ENCODE measurements at regions of chr1 and their contacts with region 1.

Region 1: DNA sequence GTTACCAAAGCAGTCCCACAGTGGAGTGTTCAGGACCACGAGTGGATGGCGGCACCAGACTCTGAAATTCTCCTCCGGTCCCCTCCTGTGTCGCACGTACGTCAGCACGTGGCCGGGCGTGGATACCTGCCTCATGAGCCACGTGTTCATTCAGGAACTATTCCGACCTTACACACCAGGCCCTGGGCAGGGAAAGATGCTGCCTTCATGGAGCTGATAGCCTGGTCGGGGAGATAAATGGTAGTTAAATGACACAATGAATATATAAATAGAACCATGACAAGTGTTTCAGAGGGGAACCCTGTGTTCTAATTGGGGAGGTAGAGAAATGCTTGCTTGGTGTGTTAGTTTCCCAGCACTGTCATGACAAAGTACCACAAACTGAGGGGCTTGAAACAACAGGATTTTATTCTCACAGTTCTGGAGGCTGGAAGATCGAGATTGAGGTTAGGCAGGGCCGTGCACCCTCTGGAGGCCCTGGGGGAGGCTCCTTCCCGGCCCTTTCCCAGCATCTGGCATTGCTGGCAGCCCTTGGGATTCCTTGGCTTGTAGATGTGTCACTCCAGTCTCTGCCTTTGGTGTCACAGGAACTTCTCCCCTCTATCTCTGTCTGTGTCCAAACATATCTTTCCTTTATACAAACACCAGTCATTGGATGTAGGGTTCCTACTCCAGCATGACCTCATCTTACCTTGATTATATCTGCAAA is 28.9 kb upstream of the GPR137B start:
- DNase-seq: no peak
- ATAC-seq: no peak
- H3K4me3 ChIP-seq: no peak overlapping the region
- H3K4me1 ChIP-seq: no peaks in the 10 kb centered on the region
- CTCF ChIP-seq: no peak

Region 2: DNA sequence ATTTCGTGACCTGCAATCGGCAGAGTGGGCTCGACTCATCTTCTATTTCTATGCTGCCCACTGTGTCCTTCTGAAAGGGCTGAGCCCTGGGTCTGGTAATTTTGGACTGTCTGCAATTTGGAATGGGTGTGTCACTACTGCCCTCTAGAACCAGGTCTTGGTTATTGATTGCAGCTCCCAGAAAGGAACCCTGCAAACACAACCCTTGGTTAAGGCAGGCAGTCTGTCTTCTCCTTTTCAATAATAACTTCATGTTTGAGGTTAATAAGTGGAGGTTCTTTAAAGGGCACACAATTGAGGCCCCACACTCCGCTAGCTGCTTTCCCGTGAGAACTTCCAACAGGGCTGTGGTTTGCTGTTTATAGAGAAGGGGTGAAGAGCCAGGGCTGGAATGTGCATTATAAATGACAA is 166.9 kb before region 1 on chr1:
- intact Hi-C with region 1: no loop called
- DNase-seq: no peak
- ATAC-seq: peak; percentile 52
- H3K4me3 ChIP-seq: no peak overlapping the region
- H3K4me1 ChIP-seq: no peaks in the 10 kb centered on the region
- CTCF ChIP-seq: no peak

Region 3: DNA sequence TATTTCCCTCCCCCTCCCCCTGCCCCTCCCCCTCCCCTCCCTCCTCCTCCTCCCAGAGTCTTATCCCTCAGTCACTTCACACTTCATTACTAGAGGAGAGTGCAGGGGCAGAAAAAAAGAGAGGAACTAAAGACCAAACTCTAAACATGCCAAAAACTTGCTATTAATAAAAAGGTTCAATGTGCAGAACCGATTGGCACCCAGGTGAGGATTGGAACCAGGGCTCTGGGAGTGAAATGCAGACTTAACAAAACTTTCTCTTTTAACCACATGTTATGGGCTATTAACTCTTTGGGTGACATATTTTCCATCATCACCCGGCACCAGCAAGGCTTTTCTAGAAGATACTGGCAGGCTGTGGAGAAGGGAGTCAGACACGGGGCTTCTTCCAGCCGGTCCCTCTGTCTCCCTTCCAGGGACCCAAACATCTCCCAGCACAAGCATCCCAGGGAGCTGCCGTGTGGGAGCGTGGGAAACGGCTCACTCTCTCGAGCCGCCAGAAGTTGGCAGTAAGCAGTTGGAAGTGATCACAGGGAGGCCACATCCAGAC is 62.2 kb before region 1 on chr1:
- intact Hi-C with region 1: no loop called
- DNase-seq: no peak
- ATAC-seq: no peak
- H3K4me3 ChIP-seq: no peak overlapping the region
- H3K4me1 ChIP-seq: peaks cover under 1% of the 10 kb centered on the region
- CTCF ChIP-seq: no peak

Region 4: DNA sequence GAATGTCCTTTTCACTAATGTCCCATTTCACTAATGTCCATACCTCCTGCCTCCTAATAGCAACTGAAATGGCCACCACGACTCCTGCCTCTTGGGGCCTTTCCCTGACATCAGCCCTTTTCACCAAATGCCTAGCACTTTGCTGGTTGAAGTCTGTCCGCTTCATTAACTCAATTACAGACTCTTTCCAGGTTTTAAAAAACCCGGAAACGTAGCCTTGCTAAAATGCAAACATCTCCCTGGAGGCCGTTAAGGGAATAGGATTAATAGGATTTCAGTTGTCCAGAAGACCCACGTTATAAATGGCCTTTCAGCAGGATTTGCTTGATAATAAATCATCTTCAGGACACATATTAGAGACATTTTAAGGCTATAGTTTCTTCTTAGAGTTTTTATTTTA is 194.0 kb after region 1 on chr1:
- intact Hi-C with region 1: no loop called
- DNase-seq: no peak
- ATAC-seq: no peak
- H3K4me3 ChIP-seq: no peak overlapping the region
- H3K4me1 ChIP-seq: no peaks in the 10 kb centered on the region
- CTCF ChIP-seq: no peak

Region 5: GRCh38 chr1:236320671-236321070 is 207.2 kb after region 1 on chr1:
- intact Hi-C with region 1: no loop called
- DNase-seq: no peak
- ATAC-seq: peak; percentile 65
- H3K4me3 ChIP-seq: no peak overlapping the region
- H3K4me1 ChIP-seq: no peaks in the 10 kb centered on the region
- CTCF ChIP-seq: no peak

Region 6: DNA sequence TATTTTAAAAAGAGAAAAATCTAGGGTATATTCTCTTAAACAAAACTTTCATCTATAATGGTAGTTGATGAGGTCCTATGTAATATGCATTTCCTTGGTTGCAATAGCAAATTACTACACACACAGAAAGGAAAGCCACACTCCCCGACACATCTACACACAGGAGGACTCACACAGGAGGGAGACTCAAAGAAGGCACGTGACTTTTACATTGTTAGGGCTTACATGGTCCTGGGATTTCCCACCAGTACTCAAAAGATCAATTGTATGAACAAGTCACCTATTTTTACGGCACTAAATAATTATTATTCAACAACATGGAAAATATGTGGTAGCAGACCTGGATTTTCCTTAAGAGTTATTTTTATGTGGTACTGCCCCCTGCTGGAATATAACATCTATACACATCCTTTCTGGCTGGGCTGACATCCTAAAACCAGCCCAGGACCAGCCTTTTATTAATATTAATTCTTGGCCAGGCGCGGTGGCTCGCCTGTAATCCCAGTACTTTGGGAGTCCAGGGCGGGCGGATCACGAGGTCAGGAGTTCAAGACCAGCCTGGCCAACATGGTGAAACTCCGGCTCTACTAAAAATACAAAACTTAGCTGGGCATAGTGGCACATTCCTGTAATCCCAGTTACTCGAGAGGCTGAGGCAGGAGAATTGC is 376.4 kb after region 1 on chr1:
- intact Hi-C with region 1: loop called in 1 of 2 experiments (anchors 5 kb)
- DNase-seq: peak in 1 of 3 donors; percentile 45
- ATAC-seq: peak; percentile 64
- H3K4me3 ChIP-seq: no peak overlapping the region
- H3K4me1 ChIP-seq: no peaks in the 10 kb centered on the region
- CTCF ChIP-seq: no peak